Endothelial cell of umbilical vein (primary cell): ENCODE measurements at regions of chr6 and their contacts with region 1.

Region 1: DNA sequence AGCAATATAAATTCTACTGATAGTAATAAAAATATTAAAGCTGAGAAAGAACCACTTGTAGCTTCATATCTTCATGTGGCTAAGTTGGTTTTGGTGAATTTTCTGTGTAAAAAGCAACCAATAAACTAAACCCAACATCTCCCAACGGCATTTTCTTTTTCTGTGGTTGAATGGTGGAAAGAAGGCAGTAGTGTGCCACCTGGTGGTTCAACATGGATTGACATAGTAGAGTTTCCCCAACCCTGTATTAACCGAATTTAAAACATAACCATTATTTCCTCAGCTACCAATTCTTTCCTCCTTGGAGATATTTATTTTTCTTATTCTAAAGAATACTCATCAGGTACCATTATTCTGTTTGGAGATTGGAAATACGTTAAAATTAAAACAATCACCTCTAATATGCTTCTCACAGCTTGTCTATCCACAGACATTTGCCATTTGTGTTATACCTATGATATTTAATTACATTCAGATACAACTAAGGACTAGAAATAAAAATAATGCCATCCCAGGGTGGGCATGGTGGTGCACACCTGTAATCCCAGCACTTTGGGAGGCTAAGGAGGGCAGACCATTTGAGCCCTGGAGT is 117.1 kb upstream of the EEF1E1 start:
- DNase-seq: peak; percentile 62
- H3K4me3 ChIP-seq: no peak overlapping the region
- H3K27ac ChIP-seq: no peak overlapping the region
- H3K4me1 ChIP-seq: no peaks in the 10 kb centered on the region
- H3K27me3 ChIP-seq: peaks cover 0 to 8% of the 10 kb centered on the region in 2 experiments
- CTCF ChIP-seq: peak; percentile 57 to 62
- POLR2A ChIP-seq: no peak

Region 2: GRCh38 chr6:7910654-7911344 is 308.6 kb before region 1 on chr6 and contains the start of gene TXNDC5:
- CTCF ChIA-PET with region 1: no interaction called
- POLR2A ChIA-PET with region 1: no interaction called
- dilution Hi-C with region 1: no loop called
- intact Hi-C with region 1: loop called (anchors 10 kb)
- DNase-seq: peak; percentile 77
- H3K4me3 ChIP-seq: peak within 1 kb of the TSS; percentile 70 to 97 (median 76)
- H3K27ac ChIP-seq: peak within 1 kb of the TSS; percentile 94
- H3K4me1 ChIP-seq: peaks cover 45% of the 10 kb centered on the region
- H3K27me3 ChIP-seq: no peaks in the 10 kb centered on the region
- CTCF ChIP-seq: no peak
- POLR2A ChIP-seq: peak; percentile 76
- total RNA-seq, gene TXNDC5: 1,581 and 1,665 TPM in 2 replicates

Region 3: DNA sequence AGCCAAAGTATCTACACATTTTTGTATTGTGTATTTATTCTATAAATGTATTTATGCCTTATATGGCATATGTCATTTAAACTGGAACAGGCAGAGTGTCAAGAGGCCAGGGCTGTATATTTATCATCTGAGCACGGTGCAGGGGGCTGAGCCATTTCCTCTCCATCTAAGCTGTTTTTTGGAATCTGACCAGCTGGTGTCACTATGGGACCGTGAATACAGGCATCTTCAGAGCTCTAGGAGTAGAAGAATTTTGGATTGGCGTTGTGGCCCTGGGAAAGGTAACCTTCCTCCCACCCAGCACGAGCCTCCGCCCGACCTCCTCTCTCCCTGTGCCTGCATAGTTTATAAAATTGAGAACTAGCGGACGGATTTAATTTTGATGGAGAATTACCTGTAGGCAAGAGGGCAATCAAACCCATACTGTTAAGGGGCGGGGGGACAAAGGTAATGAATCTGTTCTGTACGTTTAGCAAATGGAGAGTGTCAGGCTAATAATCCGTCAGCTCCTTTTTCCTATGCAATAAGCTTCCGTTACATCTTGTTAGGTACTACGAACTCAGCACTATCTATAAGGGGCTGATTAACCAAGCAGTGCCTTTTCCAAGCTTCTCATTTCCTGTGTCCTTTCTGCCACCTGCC is 88.1 kb before region 1 on chr6:
- CTCF ChIA-PET with region 1: interaction called, 556 read pairs
- POLR2A ChIA-PET with region 1: interaction called, 6 read pairs
- dilution Hi-C with region 1: no loop called
- intact Hi-C with region 1: loop called (anchors 1 kb)
- DNase-seq: peak; percentile 65
- H3K4me3 ChIP-seq: no peak overlapping the region
- H3K27ac ChIP-seq: no peak overlapping the region
- H3K4me1 ChIP-seq: no peaks in the 10 kb centered on the region
- H3K27me3 ChIP-seq: peaks cover 4 to 6% of the 10 kb centered on the region in 2 experiments
- CTCF ChIP-seq: peak; percentile 48 to 60
- POLR2A ChIP-seq: no peak

Region 4: DNA sequence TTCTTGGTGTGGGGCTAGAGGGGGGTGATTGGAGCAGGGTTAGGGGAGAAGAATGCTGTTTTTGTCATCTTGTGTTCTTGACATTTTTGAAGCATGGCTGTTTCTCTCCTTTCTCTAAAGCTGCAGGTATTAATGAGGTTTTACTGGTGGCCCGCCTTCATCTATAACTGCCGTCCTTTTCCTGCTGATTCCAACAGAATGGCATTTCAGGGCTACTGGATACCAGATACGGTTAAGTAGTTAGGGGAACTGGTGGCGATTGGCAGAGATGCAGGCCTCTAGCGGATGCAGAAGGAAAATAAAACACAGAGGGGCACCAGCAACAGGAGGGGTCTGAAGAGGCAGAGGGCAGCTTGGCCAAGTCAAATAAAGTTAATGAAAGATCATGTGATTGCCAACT is 27.4 kb before region 1 on chr6:
- CTCF ChIA-PET with region 1: interaction called, 10 read pairs
- POLR2A ChIA-PET with region 1: no interaction called
- dilution Hi-C with region 1: no loop called
- intact Hi-C with region 1: no loop called
- DNase-seq: no peak
- H3K4me3 ChIP-seq: no peak overlapping the region
- H3K27ac ChIP-seq: no peak overlapping the region
- H3K4me1 ChIP-seq: no peaks in the 10 kb centered on the region
- H3K27me3 ChIP-seq: peaks cover 0 to 2% of the 10 kb centered on the region in 2 experiments
- CTCF ChIP-seq: no peak
- POLR2A ChIP-seq: no peak

Region 5: GRCh38 chr6:8229915-8230756 is 10.7 kb after region 1 on chr6:
- CTCF ChIA-PET with region 1: interaction called, 30 read pairs
- POLR2A ChIA-PET with region 1: no interaction called
- dilution Hi-C with region 1: no loop called
- intact Hi-C with region 1: no loop called
- DNase-seq: no peak
- H3K4me3 ChIP-seq: no peak overlapping the region
- H3K27ac ChIP-seq: no peak overlapping the region
- H3K4me1 ChIP-seq: no peaks in the 10 kb centered on the region
- H3K27me3 ChIP-seq: peaks cover 0 to 3% of the 10 kb centered on the region in 2 experiments
- CTCF ChIP-seq: no peak
- POLR2A ChIP-seq: no peak

Region 6: GRCh38 chr6:8269872-8270454 is 50.5 kb after region 1 on chr6:
- CTCF ChIA-PET with region 1: no interaction called
- POLR2A ChIA-PET with region 1: no interaction called
- dilution Hi-C with region 1: no loop called
- intact Hi-C with region 1: no loop called
- DNase-seq: no peak
- H3K4me3 ChIP-seq: no peak overlapping the region
- H3K27ac ChIP-seq: no peak overlapping the region
- H3K4me1 ChIP-seq: no peaks in the 10 kb centered on the region
- H3K27me3 ChIP-seq: no peaks in the 10 kb centered on the region
- CTCF ChIP-seq: no peak
- POLR2A ChIP-seq: no peak